ENCODE measurements at regions of chr6 and their contacts with region 1.

Region 1: DNA sequence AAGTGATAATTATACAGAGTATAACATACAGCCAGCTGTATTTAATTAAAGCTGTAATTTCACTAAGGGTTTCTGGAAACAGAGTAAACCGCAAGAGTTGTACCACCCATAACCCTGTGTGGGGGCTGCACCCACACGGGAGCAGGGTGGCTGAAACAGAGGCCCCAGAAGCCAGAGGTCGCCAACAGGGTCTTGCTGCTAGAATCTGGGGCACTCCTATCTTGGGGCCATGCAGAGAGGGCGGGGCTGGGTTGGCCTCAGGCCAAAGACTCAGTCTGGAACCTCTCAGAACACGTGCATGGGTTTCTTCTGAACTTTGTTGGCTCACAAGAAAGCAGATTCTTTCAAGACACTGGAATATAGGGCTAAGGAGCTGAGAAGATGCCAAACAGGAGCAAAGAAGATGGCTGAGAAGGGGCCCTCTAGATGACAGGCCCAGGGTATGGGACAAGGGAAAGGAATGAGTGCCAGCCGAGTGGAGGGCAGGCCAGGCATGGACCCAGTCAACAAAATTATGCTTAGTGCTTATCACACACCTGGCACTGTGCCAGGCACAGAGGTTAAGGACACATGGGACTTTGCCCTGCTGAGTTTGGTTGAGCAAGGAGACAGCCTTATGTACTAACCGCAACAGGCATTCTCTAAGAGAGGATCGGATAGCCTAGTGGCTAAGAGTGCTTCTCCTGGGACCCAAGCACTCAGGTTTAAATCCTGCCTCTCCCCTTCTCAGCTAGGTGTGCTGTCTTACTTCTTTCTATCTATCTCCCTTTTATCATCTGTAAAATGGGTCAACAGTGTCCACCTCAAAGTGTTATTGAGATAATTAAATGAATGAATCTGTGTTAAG is 96.6 kb upstream of the FOXP4 start:
- DNase-seq: no peak
- H3K4me3 ChIP-seq: no peak overlapping the region
- H3K27ac ChIP-seq: no peak overlapping the region
- H3K4me1 ChIP-seq: peaks cover 0 to 3% (median 0%) of the 10 kb centered on the region in 4 experiments; a peak in 4 of 7 replicates
- H3K27me3 ChIP-seq: peaks cover 1 to 10% (median 6%) of the 10 kb centered on the region in 4 experiments
- CTCF ChIP-seq: no peak
- EP300 ChIP-seq: no peak
- POLR2A ChIP-seq: no peak
- RAD21 ChIP-seq: no peak

Region 2: DNA sequence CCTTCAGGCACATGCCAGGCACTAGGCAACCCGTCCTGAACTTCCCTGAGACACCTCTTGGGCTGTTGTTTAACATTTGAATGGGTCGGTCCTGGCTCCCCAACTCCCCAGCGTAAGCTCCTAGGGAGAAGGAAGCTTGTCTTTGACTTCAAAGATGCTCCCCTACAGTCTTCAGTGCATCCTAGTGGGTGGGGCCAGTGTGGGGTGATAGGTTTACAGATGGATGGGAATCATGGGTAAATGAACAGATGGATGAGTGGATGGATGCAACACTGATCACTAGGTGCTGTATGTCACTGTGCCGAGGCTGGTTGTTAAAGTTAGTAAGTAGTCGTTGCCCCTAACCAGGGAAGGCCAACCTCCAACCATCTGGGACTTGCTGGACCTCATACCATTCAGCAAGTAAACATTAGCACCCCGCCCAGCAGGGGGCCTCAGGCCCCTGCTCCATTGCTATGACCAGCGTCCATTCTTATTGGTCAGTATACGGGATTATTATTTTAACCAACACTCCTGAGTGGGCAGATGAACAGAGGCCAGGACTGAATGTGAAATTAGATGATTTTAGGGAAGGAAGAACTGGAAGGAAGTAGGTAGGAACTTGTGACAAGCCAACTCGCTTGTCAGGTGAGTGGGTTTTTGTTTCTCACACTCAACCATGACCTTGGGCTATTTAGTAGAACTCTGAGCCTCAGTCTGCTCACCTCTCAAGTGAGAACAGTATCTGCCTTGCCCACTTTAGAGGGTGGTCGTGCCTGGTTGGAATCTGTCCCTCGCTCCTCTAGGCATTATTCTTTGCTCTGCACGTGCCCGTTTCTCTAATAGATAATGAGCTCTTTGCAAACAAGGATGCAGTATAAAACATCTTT is 13.7 kb after region 1 on chr6:
- CTCF ChIA-PET with region 1: interaction called, 130 read pairs
- POLR2A ChIA-PET with region 1: interaction called, 3 read pairs
- DNase-seq: no peak
- H3K4me3 ChIP-seq: no peak overlapping the region
- H3K27ac ChIP-seq: no peak overlapping the region
- H3K4me1 ChIP-seq: peaks cover 2 to 18% (median 5%) of the 10 kb centered on the region in 4 experiments; a peak in 5 of 7 replicates
- H3K27me3 ChIP-seq: peaks cover 0 to 35% (median 19%) of the 10 kb centered on the region in 4 experiments; a peak in 6 of 7 replicates
- CTCF ChIP-seq: no peak
- EP300 ChIP-seq: no peak
- POLR2A ChIP-seq: no peak
- RAD21 ChIP-seq: peak in 1 of 2 experiments; percentile 43; a peak in 3 of 4 replicates

Region 3: GRCh38 chr6:41568585-41569384 is 119.2 kb after region 1 on chr6:
- CTCF ChIA-PET with region 1: no interaction called
- POLR2A ChIA-PET with region 1: no interaction called
- DNase-seq: no peak
- H3K4me3 ChIP-seq: 0 out of 8 replicates have a peak overlapping the region, but pooled peaks of 1 of the 4 experiments have one; percentile 28
- H3K27ac ChIP-seq: no peak overlapping the region
- H3K4me1 ChIP-seq: peaks cover 22 to 42% (median 33%) of the 10 kb centered on the region in 4 experiments
- H3K27me3 ChIP-seq: no peaks in the 10 kb centered on the region
- CTCF ChIP-seq: no peak
- EP300 ChIP-seq: no peak
- POLR2A ChIP-seq: no peak
- RAD21 ChIP-seq: no peak

Measured in H1 (cell line).